ENCODE measurements at regions of chr3 and their contacts with region 1.

Region 1: DNA sequence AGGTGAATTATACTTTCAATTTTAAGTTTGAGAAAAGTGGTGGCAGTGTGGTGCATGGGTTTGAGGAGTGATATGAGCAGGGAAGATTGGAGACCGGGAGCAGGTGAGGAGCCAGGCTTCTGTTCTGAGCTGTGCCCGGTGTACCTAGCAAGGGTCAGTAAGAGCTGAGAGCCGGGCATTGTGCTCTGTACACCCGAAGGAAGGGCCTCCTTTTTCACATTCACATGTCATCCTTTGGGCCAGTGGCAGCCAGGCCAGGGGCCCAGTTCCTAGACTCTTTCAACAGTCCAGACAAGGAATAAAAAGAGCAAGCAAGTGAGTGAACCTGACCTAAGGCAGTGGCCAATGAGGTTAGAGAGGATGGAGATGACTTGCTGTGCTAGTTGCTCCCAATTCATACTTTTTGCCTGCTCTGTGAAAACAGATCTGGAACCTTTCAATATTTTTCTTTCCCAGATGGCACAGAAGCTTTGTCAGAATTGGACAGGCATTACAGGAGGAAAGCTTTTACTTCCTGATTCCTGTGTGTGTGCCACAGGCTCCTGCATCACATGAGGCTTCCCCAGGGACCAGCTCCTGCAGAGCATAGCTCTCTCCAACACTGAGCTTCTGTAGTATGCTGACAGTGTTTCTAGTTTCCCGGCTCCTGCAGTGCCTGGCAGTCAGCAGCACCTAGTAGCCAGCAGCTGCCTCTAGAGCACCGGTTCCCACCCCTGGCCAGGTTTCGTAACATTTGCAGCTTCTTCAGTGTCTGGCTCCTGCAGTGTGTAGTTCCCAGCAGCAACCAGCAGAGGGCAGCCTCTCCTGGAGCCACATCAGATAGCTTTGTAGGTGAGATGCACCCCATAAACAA is 5.3 kb upstream of the TRA2B start:
- DNase-seq: peak; percentile 76
- ATAC-seq: peak; percentile 99
- H3K4me3 ChIP-seq: no peak overlapping the region
- H3K27ac ChIP-seq: no peak overlapping the region
- H3K4me1 ChIP-seq: no peaks in the 10 kb centered on the region
- H3K27me3 ChIP-seq: peaks cover 4% of the 10 kb centered on the region
- CTCF ChIP-seq: peak; percentile 85
- POLR2A ChIP-seq: no peak
- RAD21 ChIP-seq: peak; percentile 65

Region 2: GRCh38 chr3:185958626-185959025 is 15.5 kb after region 1 on chr3:
- CTCF ChIA-PET with region 1: interaction called, 40 read pairs
- POLR2A ChIA-PET with region 1: no interaction called
- dilution Hi-C with region 1: no loop called
- in situ Hi-C with region 1: no loop called
- intact Hi-C with region 1: no loop called
- DNase-seq: peak; percentile 24
- ATAC-seq: no peak; the same call in 1 of the 2 replicates
- H3K4me3 ChIP-seq: no peak overlapping the region
- H3K27ac ChIP-seq: no peak overlapping the region
- H3K4me1 ChIP-seq: peaks cover 6% of the 10 kb centered on the region
- H3K27me3 ChIP-seq: peaks cover 2% of the 10 kb centered on the region
- CTCF ChIP-seq: no peak
- POLR2A ChIP-seq: no peak
- RAD21 ChIP-seq: no peak